CD4-positive, alpha-beta T cell (primary cell): ENCODE measurements at regions of chr6 and their contacts with region 1.

Region 1: GRCh38 chr6:106097411-106098231 is 11.5 kb downstream of the PRDM1 start:
- DNase-seq: peak in 12 of 14 experiments; percentile 15 to 94 (median 52)
- ATAC-seq: peak; percentile 58
- H3K4me3 ChIP-seq: peak overlapping the region; percentile 72
- H3K4me3 Mint-ChIP-seq: peak overlapping the region; percentile 90
- H3K27ac ChIP-seq: peak overlapping the region; percentile 53 to 70
- H3K27ac Mint-ChIP-seq: peak overlapping the region; percentile 95
- H3K4me1 ChIP-seq: peaks cover 28% of the 10 kb centered on the region
- H3K4me1 Mint-ChIP-seq: peaks cover 85% of the 10 kb centered on the region
- H3K27me3 ChIP-seq: no peaks in the 10 kb centered on the region
- H3K27me3 Mint-ChIP-seq: peaks cover 6% of the 10 kb centered on the region
- CTCF ChIP-seq: no peak

Region 2: GRCh38 chr6:105484238-105485161 is 613.1 kb before region 1 on chr6:
- CTCF ChIA-PET with region 1: no interaction called
- POLR2A ChIA-PET with region 1: no interaction called
- intact Hi-C with region 1: loop called in 1 of 2 experiments (anchors 10 kb)
- DNase-seq: peak in 3 of 14 experiments; percentile 50 to 61 (median 56)
- ATAC-seq: peak; percentile 32
- H3K4me3 ChIP-seq: no peak overlapping the region
- H3K4me3 Mint-ChIP-seq: no peak overlapping the region
- H3K27ac ChIP-seq: no peak overlapping the region
- H3K27ac Mint-ChIP-seq: no peak overlapping the region
- H3K4me1 ChIP-seq: no peaks in the 10 kb centered on the region
- H3K4me1 Mint-ChIP-seq: peaks cover 5% of the 10 kb centered on the region
- H3K27me3 ChIP-seq: no peaks in the 10 kb centered on the region
- H3K27me3 Mint-ChIP-seq: peaks cover 20% of the 10 kb centered on the region
- CTCF ChIP-seq: peak; percentile 75

Region 3: GRCh38 chr6:105992315-105992961 is 105.2 kb before region 1 on chr6:
- CTCF ChIA-PET with region 1: no interaction called
- POLR2A ChIA-PET with region 1: interaction called, 66 read pairs
- intact Hi-C with region 1: loop called in 1 of 2 experiments (anchors 1 kb)
- DNase-seq: peak; percentile 76 to 96 (median 86)
- ATAC-seq: peak; percentile 89
- H3K4me3 ChIP-seq: peak overlapping the region; percentile 86
- H3K4me3 Mint-ChIP-seq: peak overlapping the region; percentile 92
- H3K27ac ChIP-seq: peak overlapping the region; percentile 66 to 71
- H3K27ac Mint-ChIP-seq: peak overlapping the region; percentile 83
- H3K4me1 ChIP-seq: peaks cover 41% of the 10 kb centered on the region
- H3K4me1 Mint-ChIP-seq: peaks cover 37% of the 10 kb centered on the region
- H3K27me3 ChIP-seq: peaks cover 14 to 54% of the 10 kb centered on the region in 2 experiments
- H3K27me3 Mint-ChIP-seq: peaks cover 87% of the 10 kb centered on the region
- CTCF ChIP-seq: no peak

Region 4: GRCh38 chr6:106114492-106115265 is 17.1 kb after region 1 on chr6:
- CTCF ChIA-PET with region 1: interaction called, 4 read pairs
- POLR2A ChIA-PET with region 1: interaction called, 92 read pairs
- intact Hi-C with region 1: loop called in 1 of 2 experiments (anchors 1 kb)
- DNase-seq: peak in 4 of 14 experiments; percentile 45 to 65 (median 60)
- ATAC-seq: no peak
- H3K4me3 ChIP-seq: peak overlapping the region; percentile 28
- H3K4me3 Mint-ChIP-seq: peak overlapping the region; percentile 64
- H3K27ac ChIP-seq: no peak overlapping the region
- H3K27ac Mint-ChIP-seq: peak overlapping the region; percentile 80
- H3K4me1 ChIP-seq: peaks cover 70% of the 10 kb centered on the region
- H3K4me1 Mint-ChIP-seq: peaks cover 85% of the 10 kb centered on the region
- H3K27me3 ChIP-seq: no peaks in the 10 kb centered on the region
- H3K27me3 Mint-ChIP-seq: peaks cover 5% of the 10 kb centered on the region
- CTCF ChIP-seq: no peak

Region 5: DNA sequence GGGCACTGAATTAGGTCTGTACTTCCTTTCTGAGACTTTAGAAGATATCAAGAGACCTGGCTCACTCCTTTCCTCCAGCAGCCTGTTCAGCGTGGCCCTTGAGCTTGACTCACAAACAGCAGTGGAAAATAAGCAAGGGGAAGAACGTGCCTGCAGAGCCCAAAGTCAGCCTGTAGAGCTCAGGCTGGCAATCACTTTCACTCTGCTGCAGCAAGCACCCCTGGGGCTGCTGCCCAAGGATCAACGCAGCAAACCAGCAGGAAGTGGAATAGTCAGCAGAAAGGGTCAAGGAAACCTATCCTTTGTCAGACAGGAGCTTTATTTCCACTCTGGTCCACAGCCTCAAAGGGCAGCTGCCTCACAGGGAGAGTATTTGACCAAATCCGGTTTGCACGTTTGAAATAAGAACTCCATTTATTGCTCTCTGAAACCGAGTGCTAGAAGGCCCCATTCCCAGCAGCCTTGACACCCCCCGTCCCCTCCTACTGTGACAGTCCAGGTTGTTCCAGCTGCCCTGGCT is 65.9 kb after region 1 on chr6:
- CTCF ChIA-PET with region 1: no interaction called
- POLR2A ChIA-PET with region 1: interaction called, 24 read pairs
- intact Hi-C with region 1: no loop called
- DNase-seq: peak in 7 of 14 experiments; percentile 14 to 78 (median 55)
- ATAC-seq: peak; percentile 87
- H3K4me3 ChIP-seq: peak overlapping the region; percentile 31
- H3K4me3 Mint-ChIP-seq: peak overlapping the region; percentile 60
- H3K27ac ChIP-seq: peak overlapping the region in 1 of 2 donors; percentile 91
- H3K27ac Mint-ChIP-seq: peak overlapping the region; percentile 79
- H3K4me1 ChIP-seq: peaks cover 24% of the 10 kb centered on the region
- H3K4me1 Mint-ChIP-seq: peaks cover 28% of the 10 kb centered on the region
- H3K27me3 ChIP-seq: no peaks in the 10 kb centered on the region
- H3K27me3 Mint-ChIP-seq: no peaks in the 10 kb centered on the region
- CTCF ChIP-seq: no peak

Region 6: DNA sequence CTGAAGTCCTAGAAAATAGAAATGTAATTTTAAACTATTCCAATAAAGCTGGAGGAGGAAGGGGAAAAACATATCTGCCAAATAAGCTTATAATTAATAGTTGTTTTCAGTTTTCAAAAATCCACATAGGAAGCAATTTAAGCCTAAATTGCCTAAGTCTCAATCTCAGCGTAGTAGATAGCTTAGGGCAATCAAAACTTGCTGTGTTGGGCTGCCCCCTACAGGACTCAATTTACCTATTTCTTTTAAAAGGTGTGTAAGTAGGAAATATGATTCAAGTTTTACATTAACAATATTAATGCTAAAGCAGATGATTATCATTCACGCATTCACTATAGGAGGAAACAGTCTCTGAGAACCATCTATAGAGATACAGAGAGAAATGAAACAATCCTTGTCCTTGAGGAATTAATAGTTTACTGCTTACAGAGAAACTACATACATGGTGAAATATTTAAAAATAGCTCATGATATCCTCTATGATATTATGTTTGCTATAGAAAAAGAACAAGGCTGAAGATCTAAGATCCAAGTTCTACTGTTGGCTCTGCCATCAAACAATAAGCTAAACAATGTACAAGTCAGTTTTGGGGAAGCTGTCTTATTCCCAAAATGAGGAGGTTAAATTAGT is 125.8 kb after region 1 on chr6:
- CTCF ChIA-PET with region 1: interaction called, 9 read pairs
- POLR2A ChIA-PET with region 1: interaction called, 10 read pairs
- intact Hi-C with region 1: loop called in 1 of 2 experiments (anchors 2 kb)
- DNase-seq: peak; percentile 51 to 87 (median 68)
- ATAC-seq: peak; percentile 88
- H3K4me3 ChIP-seq: no peak overlapping the region
- H3K4me3 Mint-ChIP-seq: no peak overlapping the region
- H3K27ac ChIP-seq: no peak overlapping the region
- H3K27ac Mint-ChIP-seq: peak overlapping the region; percentile 54
- H3K4me1 ChIP-seq: no peaks in the 10 kb centered on the region
- H3K4me1 Mint-ChIP-seq: peaks cover 17% of the 10 kb centered on the region
- H3K27me3 ChIP-seq: no peaks in the 10 kb centered on the region
- H3K27me3 Mint-ChIP-seq: no peaks in the 10 kb centered on the region
- CTCF ChIP-seq: peak; percentile 93